GM23248 (cell line): ENCODE measurements at regions of chr12 and their contacts with region 1.

Region 1: DNA sequence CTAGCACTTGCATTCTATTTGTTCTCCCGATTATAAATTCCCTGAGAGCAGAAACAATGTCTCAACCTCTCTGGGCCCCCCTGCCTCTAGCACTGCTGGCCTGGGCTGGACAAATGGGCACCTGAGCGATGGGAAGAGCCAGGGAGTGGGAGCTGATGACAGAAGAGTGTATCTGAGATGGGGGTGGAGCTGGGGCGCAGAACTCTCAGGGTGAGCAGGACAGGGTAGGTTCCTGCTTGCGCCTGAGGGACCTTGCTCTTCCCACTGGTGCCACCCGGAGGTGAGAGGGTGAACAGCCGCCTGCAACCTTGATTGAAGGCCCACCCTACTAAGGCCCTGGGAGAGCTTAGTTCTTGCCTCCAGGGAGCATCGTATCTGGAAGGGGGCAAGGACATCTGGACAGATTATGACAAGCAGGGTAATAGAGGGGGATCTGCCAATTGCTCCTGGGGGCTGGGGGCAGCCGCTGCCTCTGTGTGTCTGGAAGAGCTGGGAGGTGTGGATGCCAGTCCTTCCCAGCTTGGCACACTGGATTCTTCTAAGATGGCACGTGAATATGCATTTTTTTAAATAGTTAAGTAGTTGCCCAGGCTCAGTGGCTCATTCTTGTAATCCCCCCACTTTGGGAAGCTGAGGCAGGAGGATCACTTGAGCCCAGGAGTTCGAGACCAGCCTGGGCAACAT is 43.0 kb upstream of the TSPAN9 start:
- DNase-seq: peak; percentile 80
- H3K4me3 ChIP-seq: no peak overlapping the region
- H3K27ac ChIP-seq: no peak overlapping the region
- H3K4me1 ChIP-seq: no peaks in the 10 kb centered on the region
- H3K27me3 ChIP-seq: no peaks in the 10 kb centered on the region

Region 2: DNA sequence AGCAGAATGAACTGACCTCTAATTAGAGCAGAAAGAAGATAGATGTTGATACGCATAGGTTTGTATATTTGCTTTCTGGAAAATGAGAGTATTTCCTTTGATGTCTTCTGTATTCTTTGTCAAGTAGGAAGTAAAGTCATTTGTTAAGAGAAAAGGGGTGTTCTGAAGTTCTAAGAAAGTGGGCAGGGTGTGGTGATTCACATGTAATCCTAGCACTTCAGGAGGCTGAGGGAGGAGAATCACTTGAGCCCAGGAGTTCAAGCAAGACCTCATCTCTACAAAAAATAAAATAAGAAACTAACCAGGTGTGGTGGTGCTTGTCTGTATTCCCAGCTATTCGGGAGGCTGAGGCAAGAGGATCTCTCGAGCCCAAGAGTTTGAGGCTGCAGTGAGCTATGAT is 154.4 kb before region 1 on chr12:
- in situ Hi-C with region 1: loop called (anchors 10 kb)
- DNase-seq: no peak
- H3K4me3 ChIP-seq: no peak overlapping the region
- H3K27ac ChIP-seq: no peak overlapping the region
- H3K4me1 ChIP-seq: peaks cover 16% of the 10 kb centered on the region
- H3K27me3 ChIP-seq: no peaks in the 10 kb centered on the region

Region 3: DNA sequence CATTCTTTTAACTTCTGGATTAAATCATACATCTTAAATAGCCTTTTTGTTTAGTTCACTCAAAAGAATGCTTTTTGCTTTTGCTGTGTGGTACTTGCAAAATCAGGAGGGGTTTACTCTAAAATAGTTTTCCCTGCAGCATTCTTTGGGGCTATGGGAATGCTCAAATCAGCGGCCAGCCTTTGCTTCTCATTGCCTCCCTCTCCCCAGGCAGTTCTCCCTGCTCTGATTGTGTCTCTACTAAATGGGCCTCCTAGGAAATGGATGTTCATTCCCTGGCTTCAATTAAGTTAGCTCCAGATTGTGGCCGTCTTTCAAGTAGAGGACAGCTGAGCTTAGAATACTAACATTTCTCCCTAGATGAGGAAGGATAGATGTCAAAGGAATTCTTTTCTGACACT is 139.2 kb before region 1 on chr12:
- in situ Hi-C with region 1: no loop called
- DNase-seq: peak; percentile 46
- H3K4me3 ChIP-seq: 0 out of 2 replicates have a peak overlapping the region, but pooled peaks have one; percentile 4
- H3K27ac ChIP-seq: peak overlapping the region; percentile 52
- H3K4me1 ChIP-seq: peaks cover 22% of the 10 kb centered on the region
- H3K27me3 ChIP-seq: no peaks in the 10 kb centered on the region

Region 4: DNA sequence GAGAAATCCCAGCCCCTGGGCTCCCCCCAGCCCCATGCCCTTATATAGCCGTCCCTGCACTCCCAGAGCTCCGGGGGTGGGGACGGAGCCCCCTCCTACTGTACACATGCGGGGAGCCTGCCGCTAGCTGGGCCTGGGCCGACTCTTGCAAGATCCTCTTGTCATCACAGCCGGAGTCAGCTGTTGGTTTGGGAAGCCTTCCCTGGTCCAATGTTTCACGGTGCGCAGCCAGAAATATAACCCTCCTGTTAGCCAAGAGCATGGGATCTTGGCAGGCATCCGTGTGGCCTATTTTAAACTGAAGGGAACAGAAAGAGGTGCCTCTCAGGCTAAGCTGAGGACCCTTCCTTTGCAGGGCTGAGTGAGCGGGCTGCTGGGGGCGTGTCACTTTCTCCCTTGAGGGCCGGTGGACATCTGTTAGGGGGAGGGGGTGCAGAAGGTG is 218.3 kb after region 1 on chr12:
- in situ Hi-C with region 1: no loop called
- DNase-seq: peak; percentile 31
- H3K4me3 ChIP-seq: no peak overlapping the region
- H3K27ac ChIP-seq: no peak overlapping the region
- H3K4me1 ChIP-seq: no peaks in the 10 kb centered on the region
- H3K27me3 ChIP-seq: no peaks in the 10 kb centered on the region